Activated CD8-positive, alpha-beta T cell treated with anti-CD3 and anti-CD28 coated beads, Interleukin-2, amount 10 ng/mL, durations not matched to agents 7 days and 5 days (primary cell): ENCODE measurements at regions of chr11 and their contacts with region 1.

Region 1: GRCh38 chr11:128157423-128158298 is 429.7 kb downstream of the ETS1 start:
- DNase-seq: peak; percentile 79
- ATAC-seq: peak; percentile 93
- H3K4me3 Mint-ChIP-seq: peak overlapping the region; percentile 68
- H3K27ac Mint-ChIP-seq: peak overlapping the region; percentile 83
- H3K4me1 Mint-ChIP-seq: peaks cover 13% of the 10 kb centered on the region
- H3K27me3 Mint-ChIP-seq: peaks cover 12% of the 10 kb centered on the region

Region 2: DNA sequence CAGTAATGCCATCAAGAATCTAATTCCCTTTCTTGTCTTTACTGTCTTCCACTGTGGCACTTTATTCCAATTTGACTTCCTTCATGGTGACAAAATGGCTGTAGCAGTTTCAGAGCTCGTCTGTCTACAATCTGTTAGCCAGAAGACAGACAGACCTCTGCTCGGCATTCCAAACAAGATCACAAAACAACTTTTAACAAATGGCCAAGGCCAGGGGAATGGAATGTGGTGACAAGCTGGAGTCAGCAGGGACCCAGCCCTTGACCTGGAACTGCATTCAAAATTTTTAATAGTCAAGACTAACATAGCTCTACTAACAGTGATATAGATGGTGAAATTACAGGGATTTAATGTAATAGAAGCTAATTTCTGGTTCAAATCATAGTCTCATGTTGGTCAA is 207.5 kb before region 1 on chr11:
- CTCF ChIA-PET with region 1: no interaction called
- POLR2A ChIA-PET with region 1: no interaction called
- DNase-seq: no peak
- ATAC-seq: no peak
- H3K4me3 Mint-ChIP-seq: no peak overlapping the region
- H3K27ac Mint-ChIP-seq: no peak overlapping the region
- H3K4me1 Mint-ChIP-seq: no peaks in the 10 kb centered on the region
- H3K27me3 Mint-ChIP-seq: no peaks in the 10 kb centered on the region

Region 3: GRCh38 chr11:128052912-128053641 is 104.6 kb before region 1 on chr11:
- CTCF ChIA-PET with region 1: interaction called, 109 read pairs
- POLR2A ChIA-PET with region 1: no interaction called
- DNase-seq: peak; percentile 30
- ATAC-seq: peak; percentile 59
- H3K4me3 Mint-ChIP-seq: peak overlapping the region; percentile 61
- H3K27ac Mint-ChIP-seq: peak overlapping the region; percentile 90
- H3K4me1 Mint-ChIP-seq: peaks cover 63% of the 10 kb centered on the region
- H3K27me3 Mint-ChIP-seq: no peaks in the 10 kb centered on the region

Region 4: GRCh38 chr11:128146926-128147605 is 10.6 kb before region 1 on chr11:
- CTCF ChIA-PET with region 1: interaction called, 36 read pairs
- POLR2A ChIA-PET with region 1: no interaction called
- DNase-seq: no peak
- ATAC-seq: no peak
- H3K4me3 Mint-ChIP-seq: no peak overlapping the region
- H3K27ac Mint-ChIP-seq: no peak overlapping the region
- H3K4me1 Mint-ChIP-seq: no peaks in the 10 kb centered on the region
- H3K27me3 Mint-ChIP-seq: peaks cover 2% of the 10 kb centered on the region

Region 5: GRCh38 chr11:128195057-128195751 is 37.5 kb after region 1 on chr11:
- CTCF ChIA-PET with region 1: interaction called, 19 read pairs
- POLR2A ChIA-PET with region 1: no interaction called
- DNase-seq: peak; percentile 73
- ATAC-seq: peak; percentile 80
- H3K4me3 Mint-ChIP-seq: peak overlapping the region; percentile 34
- H3K27ac Mint-ChIP-seq: peak overlapping the region; percentile 64
- H3K4me1 Mint-ChIP-seq: peaks cover 38% of the 10 kb centered on the region
- H3K27me3 Mint-ChIP-seq: no peaks in the 10 kb centered on the region

Region 6: DNA sequence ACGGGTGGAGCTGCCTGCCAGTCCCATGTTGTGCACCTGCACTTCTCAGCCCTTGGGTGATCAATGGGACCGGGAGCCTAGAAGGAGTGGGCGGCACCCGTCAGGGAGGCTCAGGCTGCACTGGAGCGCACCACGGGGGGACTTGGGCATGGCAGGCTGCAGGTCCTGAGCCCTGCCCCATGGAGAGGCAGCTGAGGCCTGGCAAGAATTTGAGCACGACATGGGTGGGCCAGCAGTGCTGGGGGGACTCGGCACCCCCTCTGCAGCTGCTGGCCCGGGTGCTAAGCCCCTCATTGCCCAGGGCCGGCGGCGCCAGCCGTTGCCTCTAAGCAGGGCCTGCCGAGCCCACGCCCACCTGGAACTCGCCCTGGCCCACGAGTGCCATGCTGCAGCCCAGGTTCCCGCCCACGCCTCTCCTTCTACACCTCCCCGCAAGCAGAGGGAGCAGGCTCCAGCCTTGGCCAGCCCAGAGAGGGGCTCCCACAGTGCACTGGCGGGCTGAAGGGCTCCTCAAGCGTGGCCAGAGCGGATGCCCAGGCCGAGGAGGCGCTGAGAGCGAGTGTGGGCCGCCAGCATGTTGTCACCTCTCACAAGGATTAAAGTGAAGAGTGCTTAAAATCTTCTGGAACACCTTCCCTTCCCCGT is 57.7 kb after region 1 on chr11:
- CTCF ChIA-PET with region 1: no interaction called
- POLR2A ChIA-PET with region 1: no interaction called
- DNase-seq: no peak
- ATAC-seq: no peak
- H3K4me3 Mint-ChIP-seq: no peak overlapping the region
- H3K27ac Mint-ChIP-seq: no peak overlapping the region
- H3K4me1 Mint-ChIP-seq: no peaks in the 10 kb centered on the region
- H3K27me3 Mint-ChIP-seq: peaks cover 2% of the 10 kb centered on the region

Region 7: DNA sequence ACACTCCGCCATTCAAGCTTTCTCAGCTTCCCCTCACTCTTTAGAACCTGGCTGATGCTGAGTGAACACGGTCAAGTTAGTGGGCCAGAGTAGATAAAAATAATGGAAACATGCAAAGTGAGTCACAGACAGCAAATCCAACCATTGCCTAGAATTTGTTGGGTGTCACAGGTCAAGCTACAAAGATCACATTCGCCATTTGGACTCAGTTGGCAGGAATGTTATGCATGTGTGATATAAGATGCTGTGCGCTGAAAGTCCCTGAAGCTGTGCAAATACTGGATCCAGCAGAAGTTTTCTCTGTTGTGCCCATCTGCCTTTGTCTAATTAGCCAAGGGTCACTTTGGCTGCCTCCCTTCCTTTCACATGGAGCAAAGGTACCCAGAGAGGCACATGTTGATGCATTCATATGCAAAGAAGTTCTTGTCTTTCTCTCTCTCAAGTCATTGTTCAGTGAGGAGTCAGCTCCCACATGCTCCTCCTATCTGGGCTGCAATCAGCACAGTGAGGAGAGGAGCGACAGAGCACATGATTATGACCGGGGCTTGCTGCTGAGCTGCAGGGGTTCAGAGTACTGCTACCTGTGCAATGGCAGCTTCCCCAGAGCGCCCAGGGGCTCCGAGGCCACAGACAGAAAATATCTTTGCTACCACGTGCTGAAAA is 575.9 kb after region 1 on chr11:
- CTCF ChIA-PET with region 1: interaction called, 10 read pairs
- POLR2A ChIA-PET with region 1: no interaction called
- DNase-seq: peak; percentile 51
- ATAC-seq: peak; percentile 53
- H3K4me3 Mint-ChIP-seq: peak overlapping the region; percentile 61
- H3K27ac Mint-ChIP-seq: peak overlapping the region; percentile 78
- H3K4me1 Mint-ChIP-seq: peaks cover 98% of the 10 kb centered on the region
- H3K27me3 Mint-ChIP-seq: no peaks in the 10 kb centered on the region

Region 8: DNA sequence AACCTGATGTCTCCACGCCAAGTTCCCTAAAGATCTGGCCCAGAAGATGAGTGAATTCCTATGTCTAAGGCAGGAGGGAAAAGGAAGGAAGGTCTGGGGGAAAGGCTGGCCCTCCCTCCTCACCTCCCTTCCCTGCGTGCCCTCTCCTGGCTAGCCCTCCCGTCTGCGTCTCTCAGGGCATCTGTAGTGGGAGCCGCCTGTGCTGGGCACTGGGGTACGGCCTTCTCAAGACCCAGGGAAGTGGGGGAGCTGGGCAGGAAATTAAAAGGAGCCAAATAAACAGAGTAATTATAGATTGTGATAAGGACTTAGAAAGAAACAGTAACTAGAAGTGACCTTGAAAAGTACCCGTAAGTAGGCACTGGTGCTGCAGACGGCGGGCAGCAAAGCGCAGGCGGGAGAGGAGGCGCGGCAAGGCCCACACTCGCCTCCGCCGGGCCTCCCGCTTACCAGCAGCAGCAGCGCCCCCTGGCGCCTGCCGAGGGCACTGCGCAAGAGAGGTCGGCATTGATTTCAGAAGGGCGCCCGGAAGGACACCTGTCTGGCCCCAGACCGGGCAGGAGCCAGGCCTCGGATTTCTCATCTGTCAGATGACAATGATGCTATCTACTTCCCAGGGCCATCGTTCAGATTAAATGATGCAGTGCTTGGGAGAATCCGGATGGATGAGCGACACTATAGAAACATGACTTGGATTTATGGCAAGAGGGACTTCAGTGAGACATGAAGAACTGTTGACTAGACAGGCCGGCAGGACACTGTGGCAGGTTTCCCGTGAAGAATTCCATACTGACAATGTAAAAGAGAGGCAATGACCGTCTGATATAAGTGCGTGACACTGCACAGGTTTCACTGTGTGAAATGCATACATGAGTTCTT is 702.1 kb after region 1 on chr11:
- CTCF ChIA-PET with region 1: interaction called, 24 read pairs
- POLR2A ChIA-PET with region 1: no interaction called
- DNase-seq: peak; percentile 82
- ATAC-seq: peak; percentile 92
- H3K4me3 Mint-ChIP-seq: no peak overlapping the region
- H3K27ac Mint-ChIP-seq: no peak overlapping the region
- H3K4me1 Mint-ChIP-seq: peaks cover 8% of the 10 kb centered on the region
- H3K27me3 Mint-ChIP-seq: peaks cover 18% of the 10 kb centered on the region